Caco-2 (cell line): ENCODE measurements at regions of chrX and their contacts with region 1.

Region 1: DNA sequence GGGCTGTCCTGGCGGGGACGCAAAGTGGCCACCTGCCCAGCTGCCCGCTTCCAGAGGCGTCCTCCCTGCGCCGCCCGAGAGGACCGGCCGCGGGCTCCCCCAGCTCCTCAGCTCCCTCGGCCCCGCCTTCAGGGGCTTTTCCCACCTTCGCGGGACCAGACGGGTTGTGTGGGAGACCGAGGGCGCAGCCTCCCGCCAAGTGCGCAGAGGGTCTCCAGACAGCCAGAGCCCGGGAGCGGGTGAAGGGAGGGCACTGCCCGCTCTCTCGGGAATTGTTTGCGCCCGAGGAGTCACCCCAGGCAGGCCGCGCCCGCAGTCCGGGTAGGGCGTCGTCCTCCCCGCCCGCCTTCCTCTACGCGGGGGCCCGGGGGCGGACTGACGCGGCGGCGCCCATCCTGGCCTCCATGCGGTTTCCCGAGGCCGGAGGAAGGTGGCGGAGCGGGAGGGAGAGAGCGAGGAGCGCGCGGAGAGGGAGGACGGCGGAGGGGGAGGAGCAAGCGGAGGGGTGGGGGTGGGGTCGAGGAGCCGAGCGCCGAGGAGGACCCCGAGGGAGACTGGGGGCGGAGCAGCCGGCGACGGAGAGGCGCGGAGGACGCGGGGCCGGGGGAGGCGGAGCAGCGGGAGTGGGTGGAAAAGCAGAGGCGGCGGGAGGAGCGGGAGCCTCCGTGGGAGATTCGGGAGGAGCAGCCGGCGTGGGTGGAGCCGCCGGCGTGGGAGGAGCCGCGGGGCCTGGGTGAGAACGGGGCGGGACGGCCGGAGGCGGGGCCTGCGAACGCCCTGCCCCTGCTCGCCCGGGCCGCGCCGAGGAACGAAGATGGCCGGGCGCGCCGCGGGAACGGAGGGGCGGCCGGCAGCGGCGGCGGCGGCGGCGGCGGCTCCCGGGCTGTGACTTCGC is 47.6 kb downstream of the CLDN34 start:
- DNase-seq: peak; percentile 91 to 92
- H3K4me3 ChIP-seq: peak overlapping the region; percentile 58
- H3K4me3 Mint-ChIP-seq: peak overlapping the region; percentile 73
- H3K27ac Mint-ChIP-seq: peak overlapping the region; percentile 65
- H3K4me1 ChIP-seq: peaks cover 10% of the 10 kb centered on the region; the same call in 1 of the 2 replicates
- H3K4me1 Mint-ChIP-seq: peaks cover 30% of the 10 kb centered on the region
- H3K27me3 ChIP-seq: no peaks in the 10 kb centered on the region
- H3K27me3 Mint-ChIP-seq: no peaks in the 10 kb centered on the region
- CTCF ChIP-seq: no peak

Region 2: DNA sequence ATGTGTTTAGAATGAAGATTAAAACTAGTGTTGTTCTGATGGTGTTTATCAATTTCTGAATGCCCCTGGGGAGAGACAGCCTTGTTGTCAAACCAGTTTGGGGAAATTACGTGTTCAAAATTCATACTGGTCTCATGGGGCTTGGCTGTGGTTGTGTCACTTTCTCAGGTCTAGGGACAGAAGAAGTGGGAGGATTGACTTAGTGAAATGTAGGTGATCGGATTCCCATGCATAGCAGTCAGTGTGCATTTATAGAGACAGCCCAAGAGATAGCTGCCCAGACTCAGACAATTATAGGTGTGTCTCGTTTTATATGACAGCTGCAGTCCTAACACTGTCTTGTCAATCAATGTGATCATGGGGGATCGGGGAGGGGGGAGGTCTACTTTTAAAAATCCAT is 47.6 kb after region 1 on chrX:
- CTCF ChIA-PET with region 1: no interaction called
- POLR2A ChIA-PET with region 1: no interaction called
- intact Hi-C with region 1: loop called (anchors 5 kb)
- DNase-seq: peak in 1 of 2 experiments; percentile 4
- H3K4me3 ChIP-seq: no peak overlapping the region
- H3K4me3 Mint-ChIP-seq: no peak overlapping the region
- H3K27ac Mint-ChIP-seq: no peak overlapping the region
- H3K4me1 ChIP-seq: peaks cover 10% of the 10 kb centered on the region; the same call in 1 of the 2 replicates
- H3K4me1 Mint-ChIP-seq: peaks cover 9% of the 10 kb centered on the region
- H3K27me3 ChIP-seq: no peaks in the 10 kb centered on the region
- H3K27me3 Mint-ChIP-seq: no peaks in the 10 kb centered on the region
- CTCF ChIP-seq: no peak